Vagina (tissue), 2 donors: ENCODE measurements at regions of chr19 and their contacts with region 1.

Region 1: GRCh38 chr19:15379083-15379995 is at the start of gene AKAP8:
- DNase-seq: peak in 1 of 2 donors; percentile 99
- H3K4me3 ChIP-seq: peak within 1 kb of the TSS; percentile 98 to 100
- H3K27ac ChIP-seq: peak within 1 kb of the TSS; percentile 95
- H3K4me1 ChIP-seq: peaks cover 50% of the 10 kb centered on the region
- H3K27me3 ChIP-seq: no peaks in the 10 kb centered on the region
- CTCF ChIP-seq: no peak
- POLR2A ChIP-seq: peak in 1 of 2 donors; percentile 67
- total RNA-seq, gene AKAP8: 27.7 TPM

Region 2: DNA sequence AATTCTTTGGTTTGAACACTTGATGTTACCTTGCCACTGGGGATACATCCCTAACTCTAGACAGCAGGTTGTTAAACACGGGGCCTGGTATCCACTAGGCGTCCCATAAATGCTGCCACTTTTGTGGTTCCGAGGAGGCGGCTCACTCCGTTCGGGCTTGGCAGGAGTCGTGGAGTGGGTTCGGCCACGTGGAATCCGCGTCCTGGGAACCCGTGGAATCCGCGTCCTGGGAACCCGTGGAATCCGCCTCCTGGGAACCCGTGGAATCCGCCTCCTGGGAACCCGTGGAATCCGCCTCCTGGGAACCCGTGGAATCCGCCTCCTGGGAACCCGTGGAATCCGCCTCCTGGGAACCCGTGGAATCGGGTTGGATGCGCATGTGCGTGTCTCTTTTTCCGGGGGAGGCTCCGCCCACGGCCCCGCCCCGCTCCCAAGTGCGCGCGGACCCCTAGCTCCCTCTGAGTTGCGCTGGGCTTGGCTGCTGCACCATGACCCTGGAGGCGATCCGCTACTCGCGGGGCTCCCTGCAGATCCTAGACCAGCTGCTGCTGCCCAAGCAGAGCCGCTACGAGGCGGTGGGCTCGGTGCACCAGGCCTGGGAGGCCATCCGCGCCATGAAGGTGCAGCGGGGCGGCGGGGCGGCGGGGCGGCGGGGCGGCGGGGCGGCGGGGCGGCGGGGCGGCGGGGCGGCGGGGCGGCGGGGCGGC is 1615.1 kb before region 1 on chr19 and contains the start of gene MRI1:
- intact Hi-C with region 1: no loop called
- DNase-seq: no peak
- H3K4me3 ChIP-seq: peak within 1 kb of the TSS; percentile 71 to 80
- H3K27ac ChIP-seq: peak within 1 kb of the TSS; percentile 73
- H3K4me1 ChIP-seq: peaks cover 30% of the 10 kb centered on the region
- H3K27me3 ChIP-seq: no peaks in the 10 kb centered on the region
- CTCF ChIP-seq: no peak
- POLR2A ChIP-seq: peak in 1 of 2 donors; percentile 41
- total RNA-seq, gene MRI1: 69.0 TPM

Region 3: DNA sequence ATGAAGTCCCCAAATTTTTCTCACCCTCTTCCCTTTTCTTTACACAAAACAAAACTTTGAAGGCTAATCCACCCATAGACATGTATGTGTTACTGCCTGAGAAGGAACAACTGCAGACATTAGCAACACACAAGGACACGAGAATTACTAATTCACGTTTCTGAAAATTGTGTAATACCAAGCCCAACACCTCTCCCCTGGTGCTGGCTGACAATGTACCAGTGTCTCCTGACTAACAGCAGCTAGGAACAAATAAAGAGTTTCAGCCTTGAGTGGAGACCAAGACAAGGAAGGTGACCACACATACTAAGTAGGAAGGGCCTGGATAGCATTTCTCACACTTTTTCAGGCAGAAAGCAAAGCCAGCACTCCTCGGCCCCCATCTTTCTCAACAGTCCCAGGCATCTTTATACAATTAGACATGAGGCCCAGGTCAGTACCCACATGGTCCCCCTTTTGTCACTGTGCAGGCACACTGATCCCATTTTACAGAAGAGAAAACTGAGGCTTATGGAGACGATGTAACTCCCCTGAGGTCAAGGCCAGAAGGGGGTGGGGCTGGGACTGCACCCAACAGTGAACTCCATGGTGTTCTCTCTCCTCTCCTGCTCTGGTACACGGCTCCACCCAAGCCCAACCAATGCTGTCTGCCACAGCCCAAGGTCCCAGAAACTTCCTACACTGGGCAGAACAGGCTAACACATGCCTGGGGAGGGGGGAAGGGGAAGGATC is 55.7 kb before region 1 on chr19:
- intact Hi-C with region 1: no loop called
- DNase-seq: no peak
- H3K4me3 ChIP-seq: no peak overlapping the region
- H3K27ac ChIP-seq: peak overlapping the region; percentile 49
- H3K4me1 ChIP-seq: peaks cover 96% of the 10 kb centered on the region
- H3K27me3 ChIP-seq: no peaks in the 10 kb centered on the region
- CTCF ChIP-seq: no peak
- POLR2A ChIP-seq: no peak

Region 4: GRCh38 chr19:15432629-15433518 is 53.5 kb after region 1 on chr19:
- intact Hi-C with region 1: loop called (anchors 5 kb)
- DNase-seq: no peak
- H3K4me3 ChIP-seq: peak overlapping the region; percentile 77 to 86
- H3K27ac ChIP-seq: peak overlapping the region; percentile 88
- H3K4me1 ChIP-seq: peaks cover 56% of the 10 kb centered on the region
- H3K27me3 ChIP-seq: no peaks in the 10 kb centered on the region
- CTCF ChIP-seq: no peak
- POLR2A ChIP-seq: peak in 1 of 2 donors; percentile 20